ENCODE measurements at regions of chrX and their contacts with region 1.

Region 1: GRCh38 chrX:54182864-54183608 is at the start of gene FAM120C:
- DNase-seq: peak; percentile 53 to 72
- H3K4me3 ChIP-seq: peak within 1 kb of the TSS; percentile 78
- H3K27ac ChIP-seq: peak within 1 kb of the TSS; percentile 73
- H3K4me1 ChIP-seq: peaks cover 40% of the 10 kb centered on the region
- H3K27me3 ChIP-seq: no peaks in the 10 kb centered on the region
- CTCF ChIP-seq: no peak
- total RNA-seq, gene FAM120C: 21.6 and 22.0 TPM in 2 replicates

Region 2: DNA sequence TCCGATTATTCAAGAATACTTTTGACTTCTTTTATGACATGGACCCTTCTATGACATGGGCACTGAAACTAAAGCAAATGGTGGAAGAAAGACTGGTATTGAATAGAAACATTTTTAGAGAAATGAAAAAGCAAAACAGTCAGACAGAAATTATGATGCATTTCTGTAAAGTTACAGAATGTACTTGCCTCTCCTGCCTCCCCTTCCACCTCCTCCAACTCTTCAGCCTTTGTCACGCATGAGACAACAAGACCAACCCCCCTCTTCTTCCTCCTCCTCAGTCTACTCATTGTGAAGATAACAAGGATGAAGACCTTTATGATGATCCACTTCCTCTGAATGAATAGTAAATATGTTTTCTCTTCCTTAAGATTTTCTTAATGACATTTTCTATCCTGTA is 450.2 kb before region 1 on chrX:
- CTCF ChIA-PET with region 1: no interaction called
- POLR2A ChIA-PET with region 1: no interaction called
- intact Hi-C with region 1: loop called (anchors 5 kb)
- DNase-seq: no peak
- H3K4me3 ChIP-seq: no peak overlapping the region
- H3K27ac ChIP-seq: no peak overlapping the region
- H3K4me1 ChIP-seq: no peaks in the 10 kb centered on the region
- H3K27me3 ChIP-seq: no peaks in the 10 kb centered on the region
- CTCF ChIP-seq: no peak

Region 3: GRCh38 chrX:54439967-54440871 is 257.2 kb after region 1 on chrX and contains the start of gene TSR2:
- CTCF ChIA-PET with region 1: no interaction called
- POLR2A ChIA-PET with region 1: no interaction called
- intact Hi-C with region 1: loop called (anchors 2 kb)
- DNase-seq: peak; percentile 76 to 80
- H3K4me3 ChIP-seq: peak within 1 kb of the TSS; percentile 83
- H3K27ac ChIP-seq: no peak within 1 kb of the TSS
- H3K4me1 ChIP-seq: peaks cover 8% of the 10 kb centered on the region
- H3K27me3 ChIP-seq: no peaks in the 10 kb centered on the region
- CTCF ChIP-seq: peak; percentile 23; the same call in 1 of the 2 replicates
- total RNA-seq, gene TSR2: 53.0 and 56.9 TPM in 2 replicates

Region 4: GRCh38 chrX:54721424-54721823 is 538.4 kb after region 1 on chrX:
- CTCF ChIA-PET with region 1: no interaction called
- POLR2A ChIA-PET with region 1: no interaction called
- intact Hi-C with region 1: no loop called
- DNase-seq: peak; percentile 8 to 55
- H3K4me3 ChIP-seq: no peak overlapping the region
- H3K27ac ChIP-seq: no peak overlapping the region
- H3K4me1 ChIP-seq: no peaks in the 10 kb centered on the region
- H3K27me3 ChIP-seq: no peaks in the 10 kb centered on the region
- CTCF ChIP-seq: no peak

Region 5: DNA sequence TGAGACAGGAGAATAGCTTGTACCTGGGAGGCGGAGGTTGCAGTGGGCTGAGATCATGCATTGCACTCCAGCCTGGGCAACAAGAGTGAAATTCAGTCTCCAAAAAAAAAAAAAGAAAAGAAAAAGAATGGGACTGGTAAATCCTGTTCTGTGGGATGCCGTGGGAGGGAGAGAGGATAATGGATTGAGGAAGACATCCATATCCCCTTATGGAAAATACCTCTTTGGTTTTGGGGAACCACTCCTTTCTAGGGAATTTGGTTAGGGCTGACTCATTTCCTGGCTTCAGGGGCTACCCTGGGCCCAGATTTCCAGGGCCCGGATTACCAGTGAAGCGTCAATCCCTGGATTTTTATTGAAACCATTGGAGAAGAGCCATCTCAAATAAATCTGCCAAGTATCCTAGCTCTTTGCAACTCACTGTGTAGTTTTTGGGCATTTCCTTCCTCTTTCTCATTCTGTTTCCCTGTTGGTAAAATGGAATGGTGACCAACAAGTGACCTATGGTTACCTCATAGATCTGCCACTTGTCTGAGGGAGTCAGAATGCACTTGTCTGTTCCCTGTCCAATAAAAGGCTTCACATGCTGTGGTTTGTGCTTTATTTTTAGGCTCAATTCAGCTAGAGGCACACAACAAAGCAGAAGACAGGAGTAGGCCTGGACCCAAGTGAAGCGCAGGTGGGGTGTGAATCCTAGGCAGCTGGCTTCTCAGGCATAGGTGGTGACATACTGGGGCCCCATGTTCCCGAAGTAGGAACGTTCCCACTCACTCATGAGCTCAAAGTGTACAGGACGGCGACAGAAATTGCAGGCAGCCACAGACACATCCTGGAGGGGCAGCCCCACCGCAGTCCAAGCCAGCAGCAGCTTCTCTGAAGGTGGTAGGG is 825.7 kb after region 1 on chrX:
- CTCF ChIA-PET with region 1: interaction called, 3 read pairs
- POLR2A ChIA-PET with region 1: no interaction called
- intact Hi-C with region 1: loop called (anchors 5 kb)
- DNase-seq: peak; percentile 71 to 95
- H3K4me3 ChIP-seq: no peak overlapping the region
- H3K27ac ChIP-seq: peak overlapping the region; percentile 96
- H3K4me1 ChIP-seq: peaks cover 73% of the 10 kb centered on the region
- H3K27me3 ChIP-seq: no peaks in the 10 kb centered on the region
- CTCF ChIP-seq: no peak